Activated CD4-positive, alpha-beta memory T cell treated with anti-CD3 and anti-CD28 coated beads for 36 hours (primary cell): ENCODE measurements at regions of chr7 and their contacts with region 1.

Region 1: GRCh38 chr7:40329601-40330153 is 194.9 kb downstream of the SUGCT start:
- DNase-seq: no peak
- H3K4me3 Mint-ChIP-seq: no peak overlapping the region
- H3K27ac Mint-ChIP-seq: no peak overlapping the region
- H3K4me1 Mint-ChIP-seq: no peaks in the 10 kb centered on the region
- H3K27me3 Mint-ChIP-seq: no peaks in the 10 kb centered on the region

Region 2: GRCh38 chr7:41696314-41696916 is 1366.7 kb after region 1 on chr7:
- CTCF ChIA-PET with region 1: no interaction called
- POLR2A ChIA-PET with region 1: no interaction called
- intact Hi-C with region 1: loop called (anchors 5 kb)
- DNase-seq: peak; percentile 31
- H3K4me3 Mint-ChIP-seq: no peak overlapping the region
- H3K27ac Mint-ChIP-seq: no peak overlapping the region
- H3K4me1 Mint-ChIP-seq: peaks cover 6% of the 10 kb centered on the region
- H3K27me3 Mint-ChIP-seq: peaks cover 25% of the 10 kb centered on the region